IMR-90 (cell line): ENCODE measurements at regions of chr11 and their contacts with region 1.

Region 1: DNA sequence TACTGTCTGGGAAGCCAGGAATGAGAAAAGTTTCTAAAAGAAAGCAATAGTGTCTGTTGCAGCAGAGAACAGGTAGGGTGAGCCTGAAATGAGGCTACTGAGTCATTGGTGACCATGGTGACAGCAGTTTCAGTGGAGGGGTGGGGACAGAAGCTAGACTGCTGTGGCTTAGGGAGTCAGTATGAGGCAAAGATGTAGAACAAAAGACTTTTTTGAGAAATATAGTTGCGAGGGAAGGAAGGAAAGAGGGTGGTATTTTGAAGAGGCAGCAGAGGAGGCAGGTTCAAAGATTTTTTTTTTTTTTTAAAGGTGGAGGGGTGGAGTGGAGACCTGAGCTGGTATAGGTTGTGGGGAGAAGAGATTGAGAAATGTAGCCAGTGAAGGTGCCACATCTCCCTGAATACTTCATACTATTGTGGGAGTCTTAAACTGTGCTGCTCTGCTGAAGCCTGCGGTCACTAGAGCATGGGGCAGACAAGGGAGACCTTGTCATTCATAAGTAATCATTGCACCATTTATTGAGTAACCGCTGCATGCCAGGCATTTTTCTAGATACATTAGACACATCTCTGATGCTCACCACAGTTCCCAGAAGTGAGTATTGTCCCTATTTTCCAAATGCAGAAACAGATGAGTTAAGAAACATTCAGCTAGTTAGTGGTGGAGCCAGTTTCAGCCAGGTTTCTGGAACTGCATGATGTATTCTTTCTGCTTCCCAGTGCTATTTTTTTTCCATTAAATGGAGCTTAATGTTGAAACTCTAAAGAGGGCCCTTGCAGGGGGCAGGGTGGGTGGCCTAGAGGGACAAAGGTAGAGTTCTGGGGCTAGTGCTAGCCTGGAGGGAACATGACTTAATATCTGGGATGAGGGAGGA is 49.9 kb downstream of the STIM1 start:
- DNase-seq: peak; percentile 76
- ATAC-seq: peak; percentile 93
- H3K4me3 ChIP-seq: no peak overlapping the region
- H3K27ac ChIP-seq: peak overlapping the region; percentile 65; the same call in 1 of the 2 replicates
- H3K4me1 ChIP-seq: peaks cover 12% of the 10 kb centered on the region
- H3K27me3 ChIP-seq: no peaks in the 10 kb centered on the region
- CTCF ChIP-seq: no peak
- POLR2A ChIP-seq: no peak
- RAD21 ChIP-seq: no peak

Region 2: GRCh38 chr11:3885855-3886254 is 19.5 kb before region 1 on chr11:
- CTCF ChIA-PET with region 1: no interaction called
- POLR2A ChIA-PET with region 1: no interaction called
- dilution Hi-C with region 1: no loop called
- in situ Hi-C with region 1: no loop called
- intact Hi-C with region 1: loop called (anchors 2 kb)
- DNase-seq: no peak
- ATAC-seq: no peak
- H3K4me3 ChIP-seq: no peak overlapping the region
- H3K27ac ChIP-seq: no peak overlapping the region
- H3K4me1 ChIP-seq: no peaks in the 10 kb centered on the region
- H3K27me3 ChIP-seq: no peaks in the 10 kb centered on the region
- CTCF ChIP-seq: no peak
- POLR2A ChIP-seq: no peak
- RAD21 ChIP-seq: no peak

Region 3: DNA sequence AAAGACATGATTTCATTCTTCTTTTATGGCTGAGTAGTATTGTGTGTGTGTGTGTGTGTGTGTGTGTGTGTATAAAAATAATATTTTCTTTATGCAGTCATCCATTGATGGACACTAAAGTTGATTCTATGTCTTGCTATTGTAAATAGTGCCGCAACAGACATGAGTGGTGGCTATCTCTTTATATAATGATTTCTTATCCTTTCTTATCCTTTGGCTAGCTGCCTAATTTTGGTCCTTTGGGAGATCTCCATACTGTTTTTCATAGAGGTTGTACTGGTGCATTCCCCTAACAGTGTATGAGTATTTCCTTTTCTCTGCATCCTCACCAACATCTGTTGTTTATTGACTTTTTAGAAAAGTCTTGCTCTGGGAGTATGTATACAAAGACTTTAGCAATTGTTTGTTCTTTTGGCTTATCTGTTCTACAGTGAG is 57.1 kb after region 1 on chr11:
- CTCF ChIA-PET with region 1: no interaction called
- POLR2A ChIA-PET with region 1: no interaction called
- dilution Hi-C with region 1: no loop called
- in situ Hi-C with region 1: no loop called
- intact Hi-C with region 1: loop called (anchors 5 kb)
- DNase-seq: peak; percentile 67
- ATAC-seq: peak; percentile 76
- H3K4me3 ChIP-seq: no peak overlapping the region
- H3K27ac ChIP-seq: no peak overlapping the region
- H3K4me1 ChIP-seq: no peaks in the 10 kb centered on the region; the same call in 1 of the 2 replicates
- H3K27me3 ChIP-seq: no peaks in the 10 kb centered on the region
- CTCF ChIP-seq: no peak
- POLR2A ChIP-seq: no peak
- RAD21 ChIP-seq: no peak